PC-3 (cell line): ENCODE measurements at regions of chr12 and their contacts with region 1.

Region 1: DNA sequence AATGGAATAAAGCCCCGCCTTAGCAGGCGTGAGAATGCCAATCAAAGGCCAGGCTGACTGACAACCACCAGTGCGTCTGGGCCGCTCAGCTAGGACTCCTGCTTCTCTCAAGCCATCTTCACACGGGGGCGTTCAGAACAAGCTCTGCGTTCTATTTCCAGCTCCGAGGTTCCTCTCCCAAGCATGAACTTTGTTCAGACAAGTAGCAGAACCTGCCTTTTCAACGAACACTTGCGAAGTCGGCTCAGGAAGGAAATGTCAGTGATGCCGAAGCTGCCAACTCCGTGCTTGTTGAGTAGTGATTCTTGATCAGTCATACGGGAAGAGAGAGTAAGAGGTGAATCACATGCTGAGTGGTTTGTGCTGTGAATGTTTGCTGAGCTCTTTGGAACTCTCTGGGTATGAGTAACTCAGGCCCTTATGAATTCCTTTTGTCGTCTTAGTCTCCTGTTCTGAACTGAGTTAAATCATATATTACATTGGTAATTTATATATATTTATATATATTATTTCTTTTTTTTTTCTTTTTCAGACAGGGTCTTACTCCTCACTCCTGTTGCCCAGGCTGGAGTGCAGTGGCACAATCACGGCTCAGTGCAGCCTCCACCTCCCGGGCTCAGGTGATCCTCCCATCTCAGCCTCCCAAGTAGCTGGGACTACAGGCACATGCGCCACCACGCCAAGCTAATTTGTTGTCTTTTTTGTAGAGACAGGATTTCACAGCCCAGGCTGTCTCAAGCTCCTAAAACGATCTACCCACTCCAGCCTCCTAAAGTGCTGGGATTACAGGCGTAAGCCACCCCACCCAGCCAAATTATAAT is 29.4 kb upstream of the BCL7A start:
- DNase-seq: peak; percentile 99
- ATAC-seq: peak; percentile 90
- H3K4me3 ChIP-seq: peak overlapping the region; percentile 37
- H3K27ac ChIP-seq: peak overlapping the region; percentile 96
- H3K4me1 ChIP-seq: peaks cover 33% of the 10 kb centered on the region
- H3K27me3 ChIP-seq: no peaks in the 10 kb centered on the region
- CTCF ChIP-seq: 0 out of 2 replicates have a peak, but pooled peaks have one; percentile 10

Region 2: GRCh38 chr12:121964813-121965643 is 27.2 kb before region 1 on chr12:
- CTCF ChIA-PET with region 1: interaction called, 4 read pairs
- POLR2A ChIA-PET with region 1: interaction called, 6 read pairs
- intact Hi-C with region 1: loop called (anchors 1 kb)
- DNase-seq: peak; percentile 99
- ATAC-seq: peak; percentile 91
- H3K4me3 ChIP-seq: no peak overlapping the region
- H3K27ac ChIP-seq: peak overlapping the region; percentile 89
- H3K4me1 ChIP-seq: peaks cover 19% of the 10 kb centered on the region
- H3K27me3 ChIP-seq: no peaks in the 10 kb centered on the region
- CTCF ChIP-seq: no peak

Region 3: GRCh38 chr12:122123051-122123760 is 130.9 kb after region 1 on chr12:
- CTCF ChIA-PET with region 1: no interaction called
- POLR2A ChIA-PET with region 1: no interaction called
- intact Hi-C with region 1: no loop called
- DNase-seq: peak; percentile 87
- ATAC-seq: peak; percentile 71
- H3K4me3 ChIP-seq: peak overlapping the region; percentile 57
- H3K27ac ChIP-seq: no peak overlapping the region; the same call in 1 of the 2 replicates
- H3K4me1 ChIP-seq: peaks cover 9% of the 10 kb centered on the region; the same call in 1 of the 2 replicates
- H3K27me3 ChIP-seq: no peaks in the 10 kb centered on the region
- CTCF ChIP-seq: peak; percentile 97

Region 4: GRCh38 chr12:122282066-122282465 is 289.8 kb after region 1 on chr12:
- CTCF ChIA-PET with region 1: no interaction called
- POLR2A ChIA-PET with region 1: interaction called, 11 read pairs
- intact Hi-C with region 1: no loop called
- DNase-seq: peak; percentile 85
- ATAC-seq: peak; percentile 98
- H3K4me3 ChIP-seq: no peak overlapping the region
- H3K27ac ChIP-seq: no peak overlapping the region
- H3K4me1 ChIP-seq: peaks cover 9% of the 10 kb centered on the region
- H3K27me3 ChIP-seq: no peaks in the 10 kb centered on the region
- CTCF ChIP-seq: no peak